Heart left ventricle (tissue), 16 donors: ENCODE measurements at regions of chr20 and their contacts with region 1.

Region 1: DNA sequence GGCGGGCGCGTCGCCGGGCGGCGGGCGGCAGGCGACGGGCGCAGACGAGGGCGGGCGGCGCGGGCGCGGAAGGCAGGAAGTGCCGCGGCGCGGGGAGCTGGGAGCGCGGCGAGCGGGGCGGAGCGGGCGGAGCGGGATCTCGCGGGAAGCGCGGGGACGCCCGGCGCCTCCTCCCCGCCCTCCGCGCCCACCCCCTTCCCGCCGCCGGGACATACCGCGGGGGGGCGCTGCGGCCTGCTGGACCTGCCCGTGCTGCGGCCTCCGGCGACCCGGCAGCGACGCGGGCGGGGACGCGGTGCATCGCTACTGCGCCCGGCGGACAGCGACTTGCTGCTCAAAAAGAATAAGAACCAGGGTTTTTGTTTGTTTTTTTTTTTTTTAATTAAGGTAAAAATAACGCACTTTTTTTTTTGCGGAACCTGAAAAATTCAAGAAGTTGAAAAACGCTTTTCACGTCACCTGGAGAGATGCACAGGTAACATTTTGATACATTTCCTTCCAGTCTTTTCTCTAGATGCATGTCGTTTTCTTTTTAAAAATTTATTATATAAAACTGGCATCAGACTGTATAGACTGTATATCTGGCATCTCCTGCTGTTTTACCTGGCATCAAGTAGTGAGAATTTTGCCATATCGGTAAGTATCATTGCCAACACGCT is at the start of gene CENPB:
- DNase-seq: peak; percentile 88 to 96 (median 93)
- ATAC-seq: peak; percentile 81 to 93 (median 92)
- H3K4me3 ChIP-seq: peak within 1 kb of the TSS; percentile 40 to 81 (median 68)
- H3K27ac ChIP-seq: peak within 1 kb of the TSS; percentile 74 to 92 (median 84)
- H3K4me1 ChIP-seq: peaks cover 4 to 38% (median 30%) of the 10 kb centered on the region in 12 donors
- H3K27me3 ChIP-seq: no peaks in the 10 kb centered on the region
- CTCF ChIP-seq: peak; percentile 64 to 95 (median 86)
- POLR2A ChIP-seq: no peak
- total RNA-seq, gene CENPB: 56.2 to 122 (median 74.0) TPM

Region 2: GRCh38 chr20:3811467-3812258 is 24.9 kb after region 1 on chr20:
- intact Hi-C with region 1: loop called in 2 of 10 experiments (anchors 2 kb)
- DNase-seq: peak; percentile 99
- ATAC-seq: peak; percentile 89 to 94 (median 92)
- H3K4me3 ChIP-seq: peak overlapping the region in 11 of 12 donors; percentile 4 to 62 (median 47)
- H3K27ac ChIP-seq: peak overlapping the region; percentile 76 to 96 (median 90)
- H3K4me1 ChIP-seq: peaks cover 14 to 75% (median 39%) of the 10 kb centered on the region in 12 donors
- H3K27me3 ChIP-seq: no peaks in the 10 kb centered on the region
- CTCF ChIP-seq: no peak
- POLR2A ChIP-seq: peak in 1 of 2 donors; percentile 75

Region 3: GRCh38 chr20:3820048-3820900 is 33.5 kb after region 1 on chr20 and contains the start of gene AP5S1:
- intact Hi-C with region 1: loop called (anchors 1 to 2 kb)
- DNase-seq: peak; percentile 97 to 98 (median 98)
- ATAC-seq: peak; percentile 80 to 94 (median 92)
- H3K4me3 ChIP-seq: peak within 1 kb of the TSS; percentile 48 to 95 (median 67)
- H3K27ac ChIP-seq: peak within 1 kb of the TSS; percentile 93 to 99 (median 98)
- H3K4me1 ChIP-seq: peaks cover 3 to 42% (median 23%) of the 10 kb centered on the region in 12 donors
- H3K27me3 ChIP-seq: no peaks in the 10 kb centered on the region
- CTCF ChIP-seq: peak; percentile 94 to 100 (median 100)
- POLR2A ChIP-seq: peak in 1 of 2 donors; percentile 61
- total RNA-seq, gene AP5S1: 10.5 to 18.6 (median 12.0) TPM

Region 4: DNA sequence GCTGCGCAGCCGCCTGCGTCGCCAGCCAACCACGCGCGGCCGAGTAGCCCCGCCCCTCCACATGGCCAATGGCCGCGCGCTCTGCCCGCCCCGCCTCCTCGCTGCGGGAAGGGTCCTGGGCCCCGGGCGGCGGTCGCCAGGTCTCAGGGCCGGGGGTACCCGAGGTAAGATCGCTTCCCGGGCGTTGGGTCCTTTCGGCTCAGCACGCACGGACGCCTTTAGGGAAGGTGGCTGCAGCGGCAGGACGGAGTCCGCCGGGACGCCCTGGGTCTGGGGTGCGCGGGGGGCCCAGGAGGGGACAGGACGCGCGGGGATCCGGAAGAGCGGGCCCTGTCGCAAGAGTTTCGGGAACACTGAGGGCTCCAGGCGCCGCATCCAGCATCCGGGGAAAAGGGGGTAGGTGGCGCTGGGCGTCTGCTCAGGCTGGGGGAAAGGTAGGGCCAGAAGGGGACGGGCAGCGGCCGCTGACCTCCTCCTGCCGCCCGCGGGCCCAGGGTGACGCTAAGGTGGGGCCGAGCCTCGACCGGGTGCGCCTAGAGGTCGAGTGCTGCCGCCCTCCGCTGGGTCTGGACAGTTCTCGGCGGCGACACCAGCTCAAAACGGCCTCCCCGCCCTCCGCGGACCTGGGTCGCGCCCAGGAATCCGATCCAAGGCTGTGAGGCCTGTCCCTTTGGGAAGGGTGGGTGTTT is 60.1 kb after region 1 on chr20 and contains the start of gene MAVS:
- intact Hi-C with region 1: loop called in 5 of 10 experiments (anchors 1 to 10 kb)
- DNase-seq: peak; percentile 92 to 96 (median 93)
- ATAC-seq: peak; percentile 97 to 98 (median 98)
- H3K4me3 ChIP-seq: peak within 1 kb of the TSS; percentile 71 to 99 (median 90)
- H3K27ac ChIP-seq: peak within 1 kb of the TSS; percentile 92 to 98 (median 95)
- H3K4me1 ChIP-seq: peaks cover 0 to 39% (median 18%) of the 10 kb centered on the region in 12 donors
- H3K27me3 ChIP-seq: no peaks in the 10 kb centered on the region
- CTCF ChIP-seq: peak in 1 of 12 donors; percentile 25
- POLR2A ChIP-seq: peak; percentile 63 to 93
- total RNA-seq, gene MAVS: 32.5 to 74.0 (median 43.3) TPM

Region 5: DNA sequence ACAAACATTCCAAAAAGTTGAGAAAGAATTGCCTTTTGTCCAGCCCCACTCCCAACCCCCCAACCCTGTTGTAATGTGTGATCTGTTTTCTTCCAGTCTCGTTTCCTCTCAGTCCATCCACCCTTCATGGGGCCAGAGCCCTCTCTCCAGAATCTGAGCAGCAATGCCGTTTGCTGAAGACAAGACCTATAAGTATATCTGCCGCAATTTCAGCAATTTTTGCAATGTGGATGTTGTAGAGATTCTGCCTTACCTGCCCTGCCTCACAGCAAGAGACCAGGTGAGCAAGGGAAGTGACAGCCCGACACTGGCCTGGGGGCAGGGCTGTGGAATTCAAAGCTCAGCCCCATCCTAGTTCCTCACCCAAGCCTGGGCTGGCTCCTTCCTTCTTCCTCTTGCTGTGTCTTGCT is 67.7 kb after region 1 on chr20:
- intact Hi-C with region 1: loop called in 7 of 10 experiments (anchors 2 to 10 kb)
- DNase-seq: no peak
- ATAC-seq: peak in 2 of 4 donors; percentile 21 to 36
- H3K4me3 ChIP-seq: no peak overlapping the region
- H3K27ac ChIP-seq: peak overlapping the region in 1 of 12 donors; percentile 19
- H3K4me1 ChIP-seq: peaks cover 0 to 14% (median 5%) of the 10 kb centered on the region in 12 donors
- H3K27me3 ChIP-seq: no peaks in the 10 kb centered on the region
- CTCF ChIP-seq: no peak
- POLR2A ChIP-seq: no peak

Region 6: GRCh38 chr20:4076671-4077070 is 289.9 kb after region 1 on chr20:
- intact Hi-C with region 1: loop called in 2 of 10 experiments (anchors 10 kb)
- DNase-seq: no peak
- ATAC-seq: no peak
- H3K4me3 ChIP-seq: no peak overlapping the region
- H3K27ac ChIP-seq: no peak overlapping the region
- H3K4me1 ChIP-seq: peaks cover 0 to 15% (median 0%) of the 10 kb centered on the region in 12 donors
- H3K27me3 ChIP-seq: no peaks in the 10 kb centered on the region
- CTCF ChIP-seq: no peak
- POLR2A ChIP-seq: no peak

Region 7: DNA sequence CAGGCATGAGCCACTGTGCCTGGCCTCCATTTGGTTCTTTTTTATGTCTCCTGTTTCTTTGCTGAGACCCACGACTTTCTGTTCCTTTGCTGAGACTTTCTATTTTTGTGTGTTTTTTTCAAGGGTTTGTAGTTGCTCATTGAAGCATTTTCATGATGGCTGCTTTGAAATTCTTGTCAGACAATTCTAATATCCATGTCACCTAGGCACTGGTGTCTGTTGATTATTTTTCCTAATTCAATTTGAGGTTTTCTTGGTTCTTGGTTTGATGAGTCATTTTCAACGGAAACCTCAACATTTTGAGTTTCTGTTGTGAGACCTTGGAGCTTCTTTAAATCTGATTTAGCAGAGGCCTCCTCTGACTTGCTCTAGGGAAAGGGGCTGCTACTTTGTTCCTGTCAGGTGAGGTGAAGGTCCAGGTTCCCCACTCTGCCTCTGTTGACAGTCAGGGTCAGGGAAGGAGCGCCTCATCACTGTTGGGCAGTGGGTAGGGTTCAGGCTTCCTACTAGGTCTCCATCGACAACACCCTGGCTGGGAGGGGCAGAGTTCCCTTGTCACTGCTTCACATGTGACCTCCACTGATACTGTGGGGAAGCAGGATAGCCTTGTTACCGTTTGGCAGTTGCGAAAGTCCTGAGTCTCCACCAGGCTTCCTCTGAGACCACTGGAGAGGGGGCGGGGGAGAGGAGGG is 295.8 kb after region 1 on chr20:
- intact Hi-C with region 1: loop called in 2 of 10 experiments (anchors 10 kb)
- DNase-seq: peak in 4 of 5 donors; percentile 49 to 61 (median 51)
- ATAC-seq: peak in 3 of 4 donors; percentile 37 to 54 (median 50)
- H3K4me3 ChIP-seq: no peak overlapping the region
- H3K27ac ChIP-seq: peak overlapping the region in 4 of 12 donors; percentile 54 to 80 (median 64)
- H3K4me1 ChIP-seq: peaks cover 0 to 42% (median 8%) of the 10 kb centered on the region in 12 donors
- H3K27me3 ChIP-seq: no peaks in the 10 kb centered on the region
- CTCF ChIP-seq: no peak
- POLR2A ChIP-seq: no peak